ENCODE measurements at regions of chr13 and their contacts with region 1.

Region 1: DNA sequence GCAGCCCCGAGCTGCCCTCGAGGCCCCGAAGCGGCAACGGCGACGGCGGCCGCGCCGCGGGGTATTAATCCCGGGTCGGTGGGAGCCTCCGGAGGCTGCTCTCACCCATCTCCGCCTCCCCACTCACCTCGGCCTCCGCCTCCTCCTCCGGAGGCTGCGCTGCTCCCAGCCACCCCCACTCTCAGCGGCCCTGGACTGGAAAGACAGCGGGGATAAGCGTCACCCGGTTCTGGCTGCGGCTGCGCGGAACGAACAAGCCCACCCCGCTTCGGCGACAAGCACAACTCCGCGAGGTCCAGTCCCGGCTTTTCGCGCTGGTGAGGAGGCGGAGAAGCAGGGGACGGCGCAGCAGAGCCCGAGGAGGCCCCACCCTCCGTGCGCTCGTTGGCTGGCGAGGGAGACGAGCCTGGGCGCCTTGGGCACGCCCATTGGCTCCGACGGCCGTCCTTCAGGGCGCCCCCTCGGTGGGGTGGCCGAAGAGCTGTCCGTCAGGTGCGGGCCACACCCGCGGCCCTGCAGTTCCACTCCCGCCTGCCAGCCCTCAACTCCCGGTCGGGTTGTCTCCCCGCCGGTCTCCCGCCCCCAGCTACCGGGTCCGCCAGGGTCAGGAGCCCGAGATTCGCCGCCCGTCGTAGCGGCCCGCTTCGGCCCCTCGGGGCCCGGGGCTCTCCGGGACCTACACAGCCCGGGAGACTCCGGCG is at the start of gene ZMYM5:
- DNase-seq: peak; percentile 98 to 99
- H3K4me3 ChIP-seq: peak within 1 kb of the TSS; percentile 57 to 87
- H3K27ac ChIP-seq: peak within 1 kb of the TSS; percentile 98
- H3K4me1 ChIP-seq: peaks cover 34% of the 10 kb centered on the region
- H3K27me3 ChIP-seq: no peaks in the 10 kb centered on the region
- CTCF ChIP-seq: peak in 1 of 3 experiments; percentile 18
- POLR2A ChIP-seq: peak in 1 of 2 donors; percentile 92
- total RNA-seq, gene ZMYM5: 20.9 TPM

Region 2: DNA sequence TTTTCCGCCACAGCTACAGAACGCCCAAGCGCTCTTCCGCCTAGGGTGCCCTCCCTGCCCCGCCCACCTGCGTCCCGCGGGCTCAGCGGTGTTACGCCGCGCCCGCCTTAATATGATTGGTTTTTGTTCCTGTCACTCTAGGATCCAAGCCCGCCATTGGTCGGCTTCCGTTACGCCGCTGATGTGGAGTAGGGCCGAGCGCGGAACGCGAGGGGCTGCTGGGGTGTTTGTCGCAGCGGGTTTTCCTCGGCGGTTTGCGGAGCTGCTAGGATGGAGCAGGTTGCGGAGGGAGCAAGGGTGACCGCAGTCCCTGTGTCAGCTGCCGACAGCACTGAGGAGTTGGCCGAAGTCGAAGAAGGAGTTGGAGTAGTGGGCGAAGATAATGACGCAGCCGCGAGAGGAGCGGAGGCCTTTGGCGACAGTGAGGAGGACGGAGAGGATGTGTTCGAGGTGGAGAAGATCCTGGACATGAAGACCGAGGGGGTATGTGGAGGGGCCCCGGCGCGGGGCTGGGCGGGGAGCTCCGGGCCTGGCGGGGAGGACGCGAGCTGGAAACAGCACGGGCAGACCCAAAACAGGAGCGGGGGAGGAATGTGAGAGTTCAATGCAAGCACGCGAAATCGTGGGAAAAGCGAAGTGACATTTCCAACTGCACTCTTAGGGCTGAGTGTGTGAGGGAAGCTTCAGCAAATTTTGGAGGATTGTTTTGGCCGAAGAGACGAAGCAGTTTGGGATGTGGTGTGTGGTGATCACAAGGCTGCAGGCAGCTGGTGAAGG is 229.8 kb before region 1 on chr13 and contains the start of gene MPHOSPH8:
- intact Hi-C with region 1: loop called (anchors 2 kb)
- DNase-seq: peak in 1 of 2 donors; percentile 97
- H3K4me3 ChIP-seq: peak within 1 kb of the TSS; percentile 57 to 96
- H3K27ac ChIP-seq: peak within 1 kb of the TSS; percentile 95
- H3K4me1 ChIP-seq: peaks cover 33% of the 10 kb centered on the region
- H3K27me3 ChIP-seq: no peaks in the 10 kb centered on the region
- CTCF ChIP-seq: no peak
- POLR2A ChIP-seq: peak in 1 of 2 donors; percentile 90
- total RNA-seq, gene MPHOSPH8: 22.8 TPM

Region 3: DNA sequence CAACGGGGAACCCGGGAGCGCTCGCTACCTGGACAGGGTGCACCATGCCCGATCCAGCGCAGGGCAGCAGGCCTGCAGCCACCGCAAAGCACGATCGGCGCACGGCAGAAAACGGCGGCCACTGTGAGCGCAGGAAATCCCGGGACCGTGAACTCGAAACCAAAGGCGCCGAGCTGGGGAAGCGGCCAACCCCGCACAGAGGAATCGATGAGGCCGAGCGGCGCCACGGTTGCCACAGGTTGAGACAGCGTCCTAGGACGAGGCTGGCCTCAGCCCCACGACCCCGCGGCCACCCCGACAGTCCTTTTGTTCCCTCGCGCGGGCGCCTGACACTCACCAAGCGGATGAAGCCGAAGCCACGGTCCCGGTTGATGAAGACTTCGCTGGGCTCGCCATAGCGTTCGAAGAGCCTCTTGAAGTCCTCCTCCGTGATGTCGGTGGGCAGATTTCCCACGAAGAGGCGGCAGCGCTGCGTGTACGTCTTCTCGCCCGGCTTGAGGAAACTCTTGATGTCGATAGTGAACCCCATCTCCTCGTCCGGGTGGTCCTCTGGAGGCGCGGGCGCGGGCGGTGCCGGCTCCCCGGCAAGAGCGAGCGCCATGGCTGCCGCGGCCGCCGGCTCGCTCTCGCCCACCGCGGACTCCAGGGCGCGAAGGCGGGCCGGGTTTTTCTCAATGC is 81.3 kb before region 1 on chr13:
- intact Hi-C with region 1: loop called (anchors 5 kb)
- DNase-seq: no peak
- H3K4me3 ChIP-seq: peak overlapping the region; percentile 90 to 98
- H3K27ac ChIP-seq: peak overlapping the region; percentile 91
- H3K4me1 ChIP-seq: peaks cover 11% of the 10 kb centered on the region
- H3K27me3 ChIP-seq: no peaks in the 10 kb centered on the region
- CTCF ChIP-seq: no peak
- POLR2A ChIP-seq: no peak

Region 4: GRCh38 chr13:19959831-19960652 is 96.6 kb after region 1 on chr13:
- intact Hi-C with region 1: loop called (anchors 5 kb)
- DNase-seq: peak in 1 of 2 donors; percentile 92
- H3K4me3 ChIP-seq: peak overlapping the region; percentile 62 to 70
- H3K27ac ChIP-seq: peak overlapping the region; percentile 99
- H3K4me1 ChIP-seq: peaks cover 42% of the 10 kb centered on the region
- H3K27me3 ChIP-seq: no peaks in the 10 kb centered on the region
- CTCF ChIP-seq: peak; percentile 64 to 75 (median 70)
- POLR2A ChIP-seq: peak in 1 of 2 donors; percentile 57

Region 5: GRCh38 chr13:20566898-20567874 is 703.7 kb after region 1 on chr13 and contains the start of gene IFT88:
- intact Hi-C with region 1: loop called (anchors 5 kb)
- DNase-seq: peak in 1 of 2 donors; percentile 92
- H3K4me3 ChIP-seq: peak within 1 kb of the TSS; percentile 59 to 74
- H3K27ac ChIP-seq: peak within 1 kb of the TSS; percentile 91
- H3K4me1 ChIP-seq: peaks cover 10% of the 10 kb centered on the region
- H3K27me3 ChIP-seq: no peaks in the 10 kb centered on the region
- CTCF ChIP-seq: no peak
- POLR2A ChIP-seq: peak in 1 of 2 donors; percentile 12
- total RNA-seq, gene IFT88: 6.9 TPM

Measured in vagina (tissue), 2 donors.